ENCODE measurements at regions of chr4 and their contacts with region 1.

Region 1: GRCh38 chr4:143451186-143451585 is 62.3 kb upstream of the SMARCA5 start:
- DNase-seq: peak; percentile 24
- H3K4me3 ChIP-seq: no peak overlapping the region
- H3K27ac ChIP-seq: no peak overlapping the region
- H3K4me1 ChIP-seq: peaks cover 8% of the 10 kb centered on the region
- H3K27me3 ChIP-seq: no peaks in the 10 kb centered on the region
- CTCF ChIP-seq: no peak

Region 2: DNA sequence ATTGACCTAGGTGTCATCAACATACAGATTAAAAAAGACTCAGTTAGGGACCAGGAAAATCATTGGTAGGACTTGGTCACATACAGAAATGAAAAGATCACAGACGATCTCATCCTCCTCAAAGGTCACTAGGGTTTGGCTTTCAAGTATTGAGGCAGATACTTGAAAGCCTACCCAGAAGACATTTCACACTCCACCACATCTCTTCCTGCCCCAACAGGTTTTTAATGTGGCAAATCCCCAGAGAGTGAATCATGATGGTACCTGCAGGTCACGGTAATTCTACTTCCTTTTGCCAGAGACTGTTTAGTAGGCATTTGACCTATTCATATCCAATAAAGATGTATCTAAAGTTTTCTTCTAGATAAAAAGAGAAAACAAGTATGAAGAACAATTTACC is 649.2 kb before region 1 on chr4:
- CTCF ChIA-PET with region 1: no interaction called
- POLR2A ChIA-PET with region 1: interaction called, 13 read pairs
- intact Hi-C with region 1: no loop called
- DNase-seq: no peak
- H3K4me3 ChIP-seq: no peak overlapping the region
- H3K27ac ChIP-seq: no peak overlapping the region
- H3K4me1 ChIP-seq: no peaks in the 10 kb centered on the region
- H3K27me3 ChIP-seq: no peaks in the 10 kb centered on the region
- CTCF ChIP-seq: no peak

Measured in A673 (cell line).